ENCODE measurements at regions of chr22 and their contacts with region 1.

Region 1: GRCh38 chr22:22207845-22208564 is 36.6 kb upstream of the VPREB1 start:
- H3K4me3 ChIP-seq: no peak overlapping the region
- H3K27ac ChIP-seq: no peak overlapping the region
- H3K4me1 ChIP-seq: no peaks in the 10 kb centered on the region
- CTCF ChIP-seq: peak; percentile 75

Region 2: GRCh38 chr22:22144858-22145257 is 63.1 kb before region 1 on chr22:
- CTCF ChIA-PET with region 1: no interaction called
- POLR2A ChIA-PET with region 1: no interaction called
- H3K4me3 ChIP-seq: no peak overlapping the region
- H3K27ac ChIP-seq: no peak overlapping the region
- H3K4me1 ChIP-seq: no peaks in the 10 kb centered on the region
- CTCF ChIP-seq: no peak

Region 3: DNA sequence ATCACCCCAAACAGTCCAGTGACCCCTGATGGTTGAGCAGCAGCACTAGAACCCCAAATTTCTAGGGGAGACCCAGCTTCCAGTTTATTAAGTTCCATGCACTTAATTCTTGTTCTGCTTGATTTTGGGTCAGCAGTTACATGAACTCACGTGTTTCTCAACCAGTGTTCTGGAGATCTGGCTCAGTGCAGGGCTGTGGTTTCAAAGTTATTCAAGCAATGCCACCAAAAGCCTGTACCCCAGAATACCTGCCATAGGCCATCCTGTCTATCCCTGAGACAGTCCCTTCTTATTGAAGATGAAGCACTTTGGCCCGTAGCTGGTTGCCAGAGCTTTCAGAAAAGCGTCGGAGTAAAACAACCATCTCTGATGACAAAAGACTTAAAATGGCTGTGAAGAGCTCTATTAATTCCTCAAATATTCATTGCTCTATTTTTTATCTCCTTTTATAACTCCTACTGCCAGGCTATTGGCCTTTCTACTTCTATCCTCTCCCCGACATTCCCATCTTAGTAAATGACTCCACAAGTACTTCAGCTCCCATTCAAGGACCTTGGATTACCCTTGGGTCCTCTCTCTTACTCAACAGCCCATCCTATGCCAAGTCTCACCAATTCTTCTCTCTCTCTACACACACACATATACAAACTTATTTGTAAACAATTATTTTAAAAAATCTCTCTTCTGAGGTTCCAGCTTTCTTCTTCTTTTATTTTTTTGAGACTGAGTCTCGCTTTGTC is 18.6 kb after region 1 on chr22:
- CTCF ChIA-PET with region 1: interaction called, 11 read pairs
- POLR2A ChIA-PET with region 1: no interaction called
- H3K4me3 ChIP-seq: no peak overlapping the region
- H3K27ac ChIP-seq: no peak overlapping the region
- H3K4me1 ChIP-seq: no peaks in the 10 kb centered on the region
- CTCF ChIP-seq: no peak

Region 4: GRCh38 chr22:22235558-22235957 is 27.6 kb after region 1 on chr22:
- CTCF ChIA-PET with region 1: interaction called, 19 read pairs
- POLR2A ChIA-PET with region 1: no interaction called
- H3K4me3 ChIP-seq: no peak overlapping the region
- H3K27ac ChIP-seq: no peak overlapping the region
- H3K4me1 ChIP-seq: no peaks in the 10 kb centered on the region
- CTCF ChIP-seq: no peak

Region 5: DNA sequence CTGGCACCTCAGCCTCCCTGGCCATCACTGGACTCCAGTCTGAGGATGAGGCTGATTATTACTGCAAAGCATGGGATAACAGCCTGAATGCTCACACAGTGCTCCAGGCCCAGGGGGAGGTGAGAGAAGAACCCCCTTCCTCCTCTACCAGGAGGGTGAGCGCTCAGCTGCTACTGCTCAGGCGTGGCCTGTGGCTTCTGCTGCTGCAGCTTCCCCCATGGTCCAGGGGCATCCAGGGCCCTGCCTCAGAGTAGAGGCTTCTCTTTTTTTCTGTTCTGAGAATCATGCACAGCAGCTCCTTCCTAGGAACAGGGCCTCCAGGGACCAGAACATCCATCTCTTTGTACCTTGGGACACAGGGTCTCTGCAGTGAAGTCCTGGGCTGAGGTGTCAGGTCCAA is 119.7 kb after region 1 on chr22:
- CTCF ChIA-PET with region 1: interaction called, 13 read pairs
- POLR2A ChIA-PET with region 1: no interaction called
- H3K4me3 ChIP-seq: no peak overlapping the region
- H3K27ac ChIP-seq: no peak overlapping the region
- H3K4me1 ChIP-seq: no peaks in the 10 kb centered on the region
- CTCF ChIP-seq: no peak

Region 6: GRCh38 chr22:22342697-22343580 is 134.9 kb after region 1 on chr22:
- CTCF ChIA-PET with region 1: interaction called, 21 read pairs
- POLR2A ChIA-PET with region 1: no interaction called
- H3K4me3 ChIP-seq: no peak overlapping the region
- H3K27ac ChIP-seq: no peak overlapping the region
- H3K4me1 ChIP-seq: no peaks in the 10 kb centered on the region
- CTCF ChIP-seq: no peak

Region 7: DNA sequence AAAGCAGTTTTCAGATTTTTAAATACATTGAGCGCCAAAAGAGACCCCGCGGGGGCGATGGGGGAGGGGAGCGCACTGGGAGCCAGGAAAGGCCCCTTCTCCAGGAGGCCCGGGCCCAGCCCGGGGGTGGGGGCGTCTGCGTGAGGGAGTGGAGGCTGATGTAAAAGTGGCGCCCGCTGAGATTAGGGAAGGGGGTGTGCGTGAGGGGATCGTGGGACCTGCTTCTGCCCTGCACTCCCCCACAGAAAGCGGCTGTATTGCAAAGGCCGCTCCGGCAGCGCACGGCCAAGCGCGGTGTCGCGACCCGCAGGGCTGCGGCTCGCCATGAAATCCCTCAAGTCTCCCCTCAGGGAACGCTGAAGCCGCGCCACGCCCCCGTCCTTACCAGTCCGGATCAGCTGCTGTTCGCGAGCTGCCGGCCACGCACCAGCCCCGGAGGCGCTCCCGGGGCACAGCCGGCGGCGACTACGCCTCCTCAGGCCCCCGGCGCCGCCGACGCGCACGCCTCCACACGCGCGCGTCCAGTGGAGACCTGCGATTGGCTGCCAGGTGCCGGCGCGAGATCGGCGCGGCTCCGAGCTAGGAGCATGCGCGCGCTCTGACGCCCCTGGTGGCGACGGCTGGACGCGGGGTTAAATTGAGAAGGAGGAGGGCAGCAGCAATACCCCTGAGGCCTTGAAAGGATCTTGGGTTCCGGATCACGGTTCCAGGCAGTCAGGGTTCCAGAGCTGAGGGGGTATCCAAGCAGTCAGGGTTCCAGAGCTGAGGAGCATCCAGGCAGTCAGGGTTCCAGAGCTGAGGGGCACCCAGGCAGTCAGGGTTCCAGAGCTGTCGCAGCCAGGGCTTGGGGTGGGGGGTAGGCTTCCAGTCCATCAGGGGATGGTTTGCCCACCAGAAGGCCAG is 300.5 kb after region 1 on chr22 and contains the start of gene ZNF280B:
- CTCF ChIA-PET with region 1: no interaction called
- POLR2A ChIA-PET with region 1: no interaction called
- H3K4me3 ChIP-seq: peak within 1 kb of the TSS; percentile 88
- H3K27ac ChIP-seq: peak within 1 kb of the TSS; percentile 0; the same call in 1 of the 2 replicates
- H3K4me1 ChIP-seq: no peaks in the 10 kb centered on the region
- CTCF ChIP-seq: peak; percentile 96

Measured in HEK293 (cell line).